ENCODE measurements at regions of chr14 and their contacts with region 1.

Region 1: DNA sequence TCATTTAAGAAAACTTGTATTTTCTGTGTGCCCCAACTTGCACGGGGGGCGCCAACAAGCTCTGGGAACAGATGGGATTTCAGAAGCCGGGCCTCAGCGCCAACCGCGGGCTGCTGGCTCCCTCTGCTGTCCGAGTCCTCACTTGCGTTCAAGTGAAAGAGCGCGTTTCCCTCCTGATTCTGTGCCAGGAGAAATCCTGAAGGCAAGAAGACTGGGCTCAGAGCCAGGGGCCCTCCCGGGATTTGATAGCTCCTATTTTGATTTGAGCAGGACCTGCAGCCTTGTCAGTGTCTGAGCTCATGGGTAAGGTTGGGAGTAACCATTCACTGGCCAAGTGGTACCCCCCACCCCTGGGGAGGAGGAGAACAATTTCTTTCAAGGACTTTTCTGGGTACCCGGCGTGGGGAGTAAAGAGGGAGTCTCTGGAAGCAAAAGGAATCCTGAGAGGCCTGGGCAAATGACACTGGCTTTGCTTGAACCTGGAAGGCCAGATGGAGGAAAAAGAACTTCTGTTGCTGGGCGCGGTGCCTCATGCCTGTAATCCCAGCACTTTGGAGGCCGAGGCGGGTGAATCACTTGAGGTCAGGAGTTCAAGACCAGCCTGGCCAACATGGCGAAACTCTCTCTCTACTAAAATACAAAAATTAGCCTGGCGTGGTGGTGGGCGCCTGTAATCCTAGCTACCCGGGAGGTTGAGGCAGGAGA is 179.0 kb upstream of the RGS6 start:
- DNase-seq: peak; percentile 95
- ATAC-seq: peak; percentile 91 to 92

Region 2: DNA sequence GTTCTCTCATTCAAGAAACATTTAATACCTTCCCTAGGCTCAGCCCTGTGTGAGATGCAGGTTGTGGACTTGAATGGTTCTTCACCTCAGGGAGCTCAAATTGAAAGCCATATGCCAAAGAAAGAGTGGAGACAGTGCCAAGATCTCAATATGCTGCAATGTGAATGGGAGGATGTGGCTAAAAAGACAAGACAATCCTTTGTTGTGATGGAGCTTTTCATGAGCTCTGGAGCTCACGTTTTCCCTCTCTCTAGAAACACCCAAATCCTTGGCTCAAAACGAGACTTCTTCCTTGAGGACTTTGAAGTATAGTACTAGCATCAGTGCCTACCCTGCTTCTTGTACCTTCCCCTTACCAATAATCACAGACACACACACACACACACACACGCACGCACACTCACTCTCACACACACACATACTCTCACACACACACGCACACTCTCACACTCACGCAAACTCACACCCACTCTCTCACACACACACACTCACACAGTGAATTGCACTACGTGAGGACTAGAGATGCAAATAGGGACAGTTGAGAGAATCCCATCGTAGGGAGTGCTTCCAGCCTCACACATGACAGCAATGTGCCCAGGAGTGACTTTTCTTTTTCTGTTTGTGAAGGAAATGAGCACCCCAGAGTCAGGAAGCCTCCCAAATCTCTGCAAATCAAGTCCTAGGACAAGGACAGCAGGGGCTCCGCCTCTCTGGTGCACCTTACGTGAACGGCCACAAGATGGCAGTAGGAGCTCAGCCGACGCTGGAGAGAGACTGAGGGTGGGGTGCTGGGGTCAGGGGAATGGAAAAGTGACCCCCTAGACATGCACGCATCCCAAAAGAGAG is 614.6 kb before region 1 on chr14:
- intact Hi-C with region 1: loop called (anchors 1 to 2 kb)
- DNase-seq: peak; percentile 51
- ATAC-seq: peak; percentile 80 to 83

Measured in left cardiac atrium (tissue), 4 donors.